ENCODE measurements at regions of chr9 and their contacts with region 1.

Region 1: GRCh38 chr9:88991066-88992034 is at the start of gene S1PR3:
- DNase-seq: no peak
- ATAC-seq: peak; percentile 80
- H3K4me3 ChIP-seq: peak within 1 kb of the TSS; percentile 64
- H3K27ac ChIP-seq: peak within 1 kb of the TSS; percentile 67
- H3K4me1 ChIP-seq: peaks cover 17% of the 10 kb centered on the region
- H3K27me3 ChIP-seq: no peaks in the 10 kb centered on the region
- CTCF ChIP-seq: no peak
- POLR2A ChIP-seq: peak; percentile 64
- RAD21 ChIP-seq: no peak
- total RNA-seq, gene S1PR3: 28.7 and 31.1 TPM in 2 replicates

Region 2: GRCh38 chr9:88593537-88594185 is 397.7 kb before region 1 on chr9:
- CTCF ChIA-PET with region 1: no interaction called
- POLR2A ChIA-PET with region 1: no interaction called
- dilution Hi-C with region 1: no loop called
- in situ Hi-C with region 1: no loop called
- intact Hi-C with region 1: loop called (anchors 2 kb)
- DNase-seq: peak; percentile 74
- ATAC-seq: peak; percentile 90
- H3K4me3 ChIP-seq: no peak overlapping the region
- H3K27ac ChIP-seq: no peak overlapping the region
- H3K4me1 ChIP-seq: no peaks in the 10 kb centered on the region
- H3K27me3 ChIP-seq: no peaks in the 10 kb centered on the region
- CTCF ChIP-seq: peak; percentile 83
- POLR2A ChIP-seq: no peak
- RAD21 ChIP-seq: peak; percentile 87

Region 3: GRCh38 chr9:88651682-88652633 is 339.4 kb before region 1 on chr9:
- CTCF ChIA-PET with region 1: no interaction called
- POLR2A ChIA-PET with region 1: no interaction called
- dilution Hi-C with region 1: loop called (anchors 25 kb)
- in situ Hi-C with region 1: no loop called
- intact Hi-C with region 1: loop called (anchors 2 kb)
- DNase-seq: peak; percentile 99
- ATAC-seq: peak; percentile 89
- H3K4me3 ChIP-seq: no peak overlapping the region; the same call in 1 of the 2 replicates
- H3K27ac ChIP-seq: peak overlapping the region; percentile 89
- H3K4me1 ChIP-seq: peaks cover 17% of the 10 kb centered on the region
- H3K27me3 ChIP-seq: no peaks in the 10 kb centered on the region
- CTCF ChIP-seq: peak; percentile 54
- POLR2A ChIP-seq: peak; percentile 51
- RAD21 ChIP-seq: peak; percentile 44

Region 4: DNA sequence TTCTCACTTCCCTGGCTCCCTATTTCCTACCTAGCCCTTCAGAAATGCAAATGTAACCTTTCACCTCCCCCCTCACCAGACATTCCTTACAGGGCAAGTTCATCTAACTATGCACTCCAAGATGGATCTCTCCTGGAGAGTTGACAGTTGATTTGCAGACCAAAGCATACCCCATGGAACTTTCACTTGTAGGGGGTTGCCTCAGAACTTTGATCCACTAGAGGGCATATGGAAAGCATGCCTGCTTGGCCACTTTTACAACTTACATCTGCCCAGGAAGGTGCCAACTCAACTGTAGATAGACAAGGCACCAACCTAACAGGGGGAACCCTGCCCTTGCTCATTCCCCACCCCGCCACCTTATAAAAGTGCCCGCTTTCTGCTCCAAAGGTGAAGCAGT is 268.6 kb before region 1 on chr9:
- CTCF ChIA-PET with region 1: no interaction called
- POLR2A ChIA-PET with region 1: no interaction called
- dilution Hi-C with region 1: no loop called
- in situ Hi-C with region 1: no loop called
- intact Hi-C with region 1: loop called (anchors 2 kb)
- DNase-seq: peak; percentile 26
- ATAC-seq: peak; percentile 60
- H3K4me3 ChIP-seq: no peak overlapping the region
- H3K27ac ChIP-seq: no peak overlapping the region
- H3K4me1 ChIP-seq: peaks cover 5% of the 10 kb centered on the region; the same call in 1 of the 2 replicates
- H3K27me3 ChIP-seq: no peaks in the 10 kb centered on the region
- CTCF ChIP-seq: peak; percentile 45
- POLR2A ChIP-seq: no peak
- RAD21 ChIP-seq: peak; percentile 63

Region 5: GRCh38 chr9:88781628-88782391 is 209.5 kb before region 1 on chr9:
- CTCF ChIA-PET with region 1: no interaction called
- POLR2A ChIA-PET with region 1: no interaction called
- dilution Hi-C with region 1: no loop called
- in situ Hi-C with region 1: loop called (anchors 10 kb)
- intact Hi-C with region 1: loop called (anchors 5 kb)
- DNase-seq: peak; percentile 74
- ATAC-seq: peak; percentile 80
- H3K4me3 ChIP-seq: no peak overlapping the region
- H3K27ac ChIP-seq: peak overlapping the region; percentile 44; the same call in 1 of the 2 replicates
- H3K4me1 ChIP-seq: peaks cover 26% of the 10 kb centered on the region
- H3K27me3 ChIP-seq: no peaks in the 10 kb centered on the region
- CTCF ChIP-seq: peak; percentile 53
- POLR2A ChIP-seq: no peak
- RAD21 ChIP-seq: peak; percentile 64

Region 6: DNA sequence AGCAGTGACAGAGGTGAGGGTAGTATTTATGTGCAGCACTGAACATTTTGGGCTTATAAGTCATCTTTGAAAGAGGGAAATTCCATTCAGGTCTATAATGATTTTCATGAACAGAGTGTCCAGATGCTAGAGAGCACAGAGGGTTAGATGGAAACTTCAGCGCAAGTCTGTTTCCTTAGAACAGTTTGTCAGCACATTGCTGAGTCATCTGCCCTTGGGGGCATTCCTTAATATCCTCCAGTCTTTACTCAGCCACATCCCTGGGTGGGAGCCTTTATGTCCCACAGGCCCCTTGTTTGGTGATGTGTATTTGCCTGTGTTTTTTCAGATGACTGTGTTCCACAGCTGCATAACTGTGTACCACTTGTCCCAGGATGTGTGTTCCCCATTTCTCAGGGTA is 138.6 kb before region 1 on chr9:
- CTCF ChIA-PET with region 1: no interaction called
- POLR2A ChIA-PET with region 1: no interaction called
- dilution Hi-C with region 1: no loop called
- in situ Hi-C with region 1: no loop called
- intact Hi-C with region 1: loop called (anchors 5 kb)
- DNase-seq: peak; percentile 95
- ATAC-seq: peak; percentile 99
- H3K4me3 ChIP-seq: no peak overlapping the region
- H3K27ac ChIP-seq: no peak overlapping the region
- H3K4me1 ChIP-seq: 0 out of 2 replicates have a peak, but pooled peaks cover 2% of the 10 kb centered on the region
- H3K27me3 ChIP-seq: no peaks in the 10 kb centered on the region; the same call in 1 of the 2 replicates
- CTCF ChIP-seq: no peak
- POLR2A ChIP-seq: no peak
- RAD21 ChIP-seq: no peak; the same call in 1 of the 2 replicates

Region 7: DNA sequence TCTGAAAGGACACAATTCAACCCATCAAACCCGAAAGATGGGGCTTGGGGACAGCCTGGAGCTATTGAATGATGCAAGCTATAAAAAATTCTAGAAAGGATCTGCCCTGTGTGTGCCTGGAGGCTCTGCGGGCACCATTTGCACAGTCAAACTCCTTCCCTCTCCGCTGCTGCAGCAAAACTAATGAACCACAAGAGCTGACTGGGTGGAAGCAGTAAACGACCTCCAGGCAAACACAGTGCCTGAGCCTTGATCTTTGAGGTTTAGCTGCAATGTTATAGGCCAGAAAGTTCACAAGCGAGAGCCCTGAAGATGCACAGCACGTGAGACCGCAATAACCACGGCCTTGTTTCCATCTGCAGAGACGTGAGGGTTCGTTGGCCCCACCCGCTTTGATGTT is 69.3 kb before region 1 on chr9:
- CTCF ChIA-PET with region 1: no interaction called
- POLR2A ChIA-PET with region 1: no interaction called
- dilution Hi-C with region 1: no loop called
- in situ Hi-C with region 1: no loop called
- intact Hi-C with region 1: no loop called
- DNase-seq: no peak
- ATAC-seq: no peak
- H3K4me3 ChIP-seq: no peak overlapping the region
- H3K27ac ChIP-seq: no peak overlapping the region
- H3K4me1 ChIP-seq: peaks cover 2% of the 10 kb centered on the region; the same call in 1 of the 2 replicates
- H3K27me3 ChIP-seq: peaks cover 3% of the 10 kb centered on the region; the same call in 1 of the 2 replicates
- CTCF ChIP-seq: no peak
- POLR2A ChIP-seq: no peak
- RAD21 ChIP-seq: no peak

Measured in IMR-90 (cell line).